IMR-90 (cell line): ENCODE measurements at regions of chr2 and their contacts with region 1.

Region 1: GRCh38 chr2:190408538-190409271 is 550 bp downstream of the MFSD6 start:
- DNase-seq: no peak
- ATAC-seq: peak; percentile 74
- H3K4me3 ChIP-seq: peak overlapping the region; percentile 99
- H3K27ac ChIP-seq: peak overlapping the region; percentile 34; the same call in 1 of the 2 replicates
- H3K4me1 ChIP-seq: peaks cover 2% of the 10 kb centered on the region; the same call in 1 of the 2 replicates
- H3K27me3 ChIP-seq: peaks cover 13% of the 10 kb centered on the region; the same call in 1 of the 2 replicates
- CTCF ChIP-seq: no peak
- POLR2A ChIP-seq: no peak
- RAD21 ChIP-seq: no peak

Region 2: GRCh38 chr2:190468814-190469569 is 60.3 kb after region 1 on chr2:
- CTCF ChIA-PET with region 1: no interaction called
- POLR2A ChIA-PET with region 1: no interaction called
- dilution Hi-C with region 1: no loop called
- in situ Hi-C with region 1: no loop called
- intact Hi-C with region 1: loop called (anchors 5 kb)
- DNase-seq: peak; percentile 99
- ATAC-seq: peak; percentile 96
- H3K4me3 ChIP-seq: no peak overlapping the region
- H3K27ac ChIP-seq: peak overlapping the region; percentile 98; the same call in 1 of the 2 replicates
- H3K4me1 ChIP-seq: peaks cover 15% of the 10 kb centered on the region
- H3K27me3 ChIP-seq: no peaks in the 10 kb centered on the region
- CTCF ChIP-seq: no peak
- POLR2A ChIP-seq: no peak
- RAD21 ChIP-seq: peak; percentile 23; the same call in 1 of the 2 replicates

Region 3: GRCh38 chr2:190497428-190497827 is 88.7 kb after region 1 on chr2:
- CTCF ChIA-PET with region 1: no interaction called
- POLR2A ChIA-PET with region 1: no interaction called
- dilution Hi-C with region 1: no loop called
- in situ Hi-C with region 1: loop called (anchors 10 kb)
- intact Hi-C with region 1: loop called (anchors 5 kb)
- DNase-seq: no peak
- ATAC-seq: no peak
- H3K4me3 ChIP-seq: no peak overlapping the region
- H3K27ac ChIP-seq: no peak overlapping the region
- H3K4me1 ChIP-seq: peaks cover 20% of the 10 kb centered on the region
- H3K27me3 ChIP-seq: no peaks in the 10 kb centered on the region
- CTCF ChIP-seq: no peak
- POLR2A ChIP-seq: no peak
- RAD21 ChIP-seq: no peak